GM10248 (cell line): ENCODE measurements at regions of chr2 and their contacts with region 1.

Region 1: DNA sequence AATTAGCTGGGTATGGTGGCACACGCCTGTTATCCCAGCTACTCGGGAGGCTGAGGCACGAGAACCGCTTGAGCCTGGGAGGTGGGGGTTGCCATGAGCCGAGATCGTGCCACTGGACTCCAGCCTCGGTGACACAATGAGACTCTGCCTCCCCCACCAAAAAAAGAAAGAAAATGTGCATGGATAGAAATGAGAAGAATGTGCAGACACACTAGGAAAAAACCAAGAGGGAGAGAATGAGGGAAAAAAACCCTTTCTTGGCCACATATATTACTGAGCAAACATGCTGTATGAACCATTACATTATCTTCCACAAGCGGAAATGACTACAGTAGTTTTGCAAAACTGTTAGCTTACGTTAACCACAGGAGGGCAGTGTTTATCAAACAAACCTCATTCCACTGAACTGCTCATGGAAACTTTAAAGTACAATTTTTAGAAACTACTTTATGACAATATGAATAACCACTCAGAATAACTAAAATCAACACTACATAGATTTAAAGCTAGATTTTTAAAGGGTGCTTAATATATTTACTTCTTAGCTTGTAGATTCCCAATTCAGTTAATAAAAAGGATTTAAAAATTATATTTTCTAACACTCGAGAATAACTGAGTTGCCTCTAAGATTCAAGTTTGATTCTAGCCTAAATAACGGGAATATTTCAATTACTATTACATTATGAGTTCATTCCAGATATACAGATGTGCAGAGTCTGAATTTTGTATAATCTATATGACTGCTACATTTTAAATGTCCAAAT is 26.4 kb downstream of the ASXL2 start:
- DNase-seq: peak; percentile 70
- CTCF ChIP-seq: peak; percentile 66

Region 2: GRCh38 chr2:25833566-25833965 is 18.4 kb before region 1 on chr2:
- CTCF ChIA-PET with region 1: interaction called, 48 read pairs
- POLR2A ChIA-PET with region 1: no interaction called
- DNase-seq: no peak
- CTCF ChIP-seq: no peak

Region 3: DNA sequence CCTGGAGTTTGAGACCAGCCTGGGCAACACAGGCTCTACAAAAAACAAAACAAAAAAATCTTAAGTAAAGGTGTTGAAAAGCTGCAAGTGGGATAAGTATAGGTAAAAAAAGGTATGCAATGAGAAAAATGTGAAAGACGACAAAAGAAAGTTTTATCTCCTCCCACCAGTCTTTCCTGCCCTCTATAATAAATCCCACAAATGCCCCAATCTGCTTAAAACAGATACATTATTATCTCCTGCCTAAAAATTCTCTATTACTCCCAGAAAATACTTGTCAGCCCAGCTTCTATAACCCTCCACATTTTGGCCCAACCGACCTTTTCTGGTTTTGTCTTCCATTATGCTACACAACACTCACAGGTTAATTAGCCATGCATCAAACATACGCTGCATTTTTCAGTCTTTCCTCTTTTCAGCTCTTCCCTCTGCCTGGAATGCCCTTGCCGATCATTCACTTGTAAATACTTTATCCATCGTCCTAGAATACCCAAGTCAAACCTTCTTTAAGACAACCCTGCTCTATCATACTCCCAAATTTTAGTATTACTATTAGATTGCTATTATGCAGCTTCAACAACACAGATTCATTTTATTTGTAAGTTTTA is 15.6 kb after region 1 on chr2:
- CTCF ChIA-PET with region 1: interaction called, 136 read pairs
- POLR2A ChIA-PET with region 1: interaction called, 4 read pairs
- DNase-seq: no peak
- CTCF ChIP-seq: no peak

Region 4: DNA sequence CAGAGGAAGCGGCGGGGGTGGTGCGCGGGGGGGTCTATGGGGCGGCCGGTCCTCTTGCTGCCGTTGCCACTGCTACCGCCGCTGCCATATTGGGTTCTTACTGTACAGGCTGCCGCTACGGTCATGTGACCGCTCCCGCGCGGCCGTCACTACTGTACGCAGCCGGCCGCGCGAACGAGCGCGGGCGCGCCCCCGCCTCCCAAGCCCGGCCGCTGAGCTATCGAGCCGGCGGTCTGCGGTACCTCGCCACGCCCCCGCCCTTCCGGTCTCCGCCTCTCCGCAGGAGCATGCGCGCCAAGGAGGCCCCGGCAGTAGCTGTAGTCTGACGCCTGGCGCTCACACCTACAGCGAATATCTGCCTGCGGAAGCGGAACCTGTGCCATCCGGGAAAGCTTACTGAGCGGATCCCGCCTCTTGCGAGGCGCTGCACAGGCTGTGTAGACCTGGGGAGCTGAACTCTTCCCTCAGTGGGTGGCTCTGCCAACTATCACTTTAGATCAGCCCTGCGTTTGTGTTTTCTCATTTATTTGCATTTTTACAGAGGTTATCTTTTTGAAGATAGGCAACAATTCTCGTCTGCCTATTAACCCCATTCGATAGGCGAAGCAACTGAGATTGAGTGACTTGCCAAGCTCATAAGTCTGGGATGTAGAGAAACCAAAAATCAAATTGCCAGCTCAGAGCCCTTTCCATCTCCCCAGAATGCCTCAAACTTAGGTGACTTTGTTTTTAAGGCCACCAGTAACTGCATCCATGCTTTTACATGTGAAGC is 26.6 kb after region 1 on chr2 and contains the start of gene ASXL2:
- CTCF ChIA-PET with region 1: interaction called, 22 read pairs
- POLR2A ChIA-PET with region 1: interaction called, 3 read pairs
- DNase-seq: peak; percentile 95
- CTCF ChIP-seq: no peak

Region 5: DNA sequence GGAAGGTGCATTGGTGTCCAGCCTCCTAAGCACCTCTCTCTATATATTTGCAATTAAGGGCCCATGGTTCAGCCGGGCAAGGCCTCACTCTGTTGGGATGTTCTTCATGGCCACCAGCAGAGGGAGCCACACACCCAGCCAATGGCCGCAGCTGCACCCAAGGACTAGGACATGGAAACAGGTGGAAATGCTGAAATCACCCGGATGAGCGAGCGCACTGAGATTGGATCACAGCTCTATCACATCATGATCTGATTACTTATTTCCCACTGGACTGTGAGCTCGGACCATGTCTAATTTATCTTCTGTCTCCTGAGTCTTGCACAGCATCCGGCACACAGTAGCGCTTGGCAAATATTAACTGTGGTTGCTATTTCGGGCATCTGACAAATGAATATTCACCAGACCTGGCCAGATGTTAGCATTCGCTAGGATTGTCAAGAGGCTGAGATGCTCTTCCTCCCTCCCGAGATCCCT is 99.2 kb after region 1 on chr2:
- CTCF ChIA-PET with region 1: interaction called, 22 read pairs
- POLR2A ChIA-PET with region 1: no interaction called
- DNase-seq: peak; percentile 84
- CTCF ChIP-seq: peak; percentile 93